CD4-positive, alpha-beta T cell (primary cell): ENCODE measurements at regions of chr12 and their contacts with region 1.

Region 1: GRCh38 chr12:12562585-12563261 is at the start of gene DUSP16:
- DNase-seq: peak; percentile 52 to 95 (median 69)
- ATAC-seq: peak; percentile 62
- H3K4me3 ChIP-seq: peak within 1 kb of the TSS; percentile 88
- H3K4me3 Mint-ChIP-seq: peak within 1 kb of the TSS; percentile 99
- H3K27ac ChIP-seq: peak within 1 kb of the TSS; percentile 95 to 98
- H3K27ac Mint-ChIP-seq: peak within 1 kb of the TSS; percentile 99
- H3K4me1 ChIP-seq: peaks cover 19% of the 10 kb centered on the region
- H3K4me1 Mint-ChIP-seq: peaks cover 52% of the 10 kb centered on the region
- H3K27me3 ChIP-seq: no peaks in the 10 kb centered on the region
- H3K27me3 Mint-ChIP-seq: no peaks in the 10 kb centered on the region
- CTCF ChIP-seq: no peak
- total RNA-seq, gene DUSP16: 33.3 to 35.6 TPM

Region 2: DNA sequence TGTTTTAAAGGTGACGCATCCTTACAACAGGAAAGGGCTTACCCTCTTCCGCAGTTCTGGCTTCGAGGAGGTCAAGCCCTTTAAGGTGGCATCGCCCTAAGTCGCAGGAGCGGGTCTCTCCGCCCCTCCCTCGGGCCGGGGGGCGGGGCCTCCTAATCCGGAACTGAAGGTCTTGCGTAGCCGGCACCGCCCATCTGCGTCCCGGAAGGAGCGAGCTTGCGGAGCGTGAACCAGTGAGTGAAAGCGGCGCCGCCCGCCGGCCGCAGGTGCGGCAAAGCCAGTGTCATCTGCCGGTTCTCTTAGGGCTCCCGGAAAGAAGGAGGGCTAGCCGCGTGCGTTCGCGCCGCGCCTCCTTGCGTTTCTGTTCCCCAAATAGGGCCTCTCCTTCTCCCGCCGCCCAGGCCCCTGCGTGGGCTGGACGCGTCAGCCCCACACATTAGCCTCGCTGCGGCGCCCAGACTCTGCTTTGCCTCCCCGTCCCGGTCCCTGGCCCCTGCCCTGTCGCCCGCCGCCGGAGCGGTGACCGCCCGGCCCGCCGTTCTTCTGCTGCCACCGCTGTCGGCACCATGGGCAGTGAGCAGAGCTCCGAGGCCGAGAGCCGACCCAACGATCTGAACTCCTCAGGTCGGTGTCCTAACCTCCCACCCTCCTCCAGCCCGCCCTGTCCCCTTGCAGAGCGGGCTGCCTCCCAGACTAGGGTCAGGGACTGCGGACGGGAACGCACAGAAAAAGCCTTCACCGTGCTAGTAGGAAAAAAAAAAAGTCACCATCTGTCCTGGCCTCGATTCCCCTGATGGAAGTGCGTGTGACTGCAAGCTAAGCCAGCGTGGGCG is 205.6 kb before region 1 on chr12 and contains the start of gene BORCS5:
- CTCF ChIA-PET with region 1: no interaction called
- POLR2A ChIA-PET with region 1: interaction called, 26 read pairs
- intact Hi-C with region 1: loop called in 1 of 2 experiments (anchors 5 kb)
- DNase-seq: peak; percentile 96 to 99 (median 98)
- ATAC-seq: peak; percentile 85
- H3K4me3 ChIP-seq: peak within 1 kb of the TSS; percentile 87
- H3K4me3 Mint-ChIP-seq: peak within 1 kb of the TSS; percentile 94
- H3K27ac ChIP-seq: peak within 1 kb of the TSS; percentile 86 to 93
- H3K27ac Mint-ChIP-seq: peak within 1 kb of the TSS; percentile 97
- H3K4me1 ChIP-seq: peaks cover 41% of the 10 kb centered on the region
- H3K4me1 Mint-ChIP-seq: peaks cover 64% of the 10 kb centered on the region
- H3K27me3 ChIP-seq: no peaks in the 10 kb centered on the region
- H3K27me3 Mint-ChIP-seq: no peaks in the 10 kb centered on the region
- CTCF ChIP-seq: peak; percentile 30
- total RNA-seq, gene BORCS5: 36.4 to 39.3 TPM

Region 3: DNA sequence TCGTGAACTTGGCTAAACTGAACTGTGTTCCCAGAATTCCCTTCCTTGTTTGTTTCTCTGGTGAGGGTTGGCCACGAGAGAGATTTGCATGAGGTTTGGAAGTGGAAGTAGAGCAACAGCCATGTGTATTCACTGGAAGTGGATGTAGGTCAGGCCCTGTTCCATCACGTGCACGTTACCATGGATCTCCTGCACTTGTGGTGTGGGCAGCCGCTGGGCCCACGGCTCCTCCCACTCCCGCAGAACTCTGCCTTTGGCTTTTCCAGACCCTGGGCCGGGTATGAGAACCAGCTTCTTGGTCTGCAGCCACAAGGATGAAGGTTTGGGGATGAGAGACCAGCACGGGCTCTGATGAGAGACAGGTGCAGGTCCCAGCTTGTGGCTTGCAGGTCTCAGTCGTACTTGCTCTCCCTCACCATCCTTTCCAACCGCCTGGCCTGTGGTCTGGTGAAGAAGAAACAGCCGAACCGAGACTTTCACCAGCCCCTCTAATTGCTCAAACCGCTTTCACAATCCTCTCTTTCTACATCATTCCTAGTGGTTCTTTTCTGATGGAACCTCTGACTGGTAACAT is 94.9 kb before region 1 on chr12:
- CTCF ChIA-PET with region 1: interaction called, 7 read pairs
- POLR2A ChIA-PET with region 1: interaction called, 45 read pairs
- intact Hi-C with region 1: loop called in 1 of 2 experiments (anchors 2 kb)
- DNase-seq: peak in 11 of 14 experiments; percentile 15 to 87 (median 51)
- ATAC-seq: peak; percentile 23
- H3K4me3 ChIP-seq: no peak overlapping the region
- H3K4me3 Mint-ChIP-seq: peak overlapping the region; percentile 40
- H3K27ac ChIP-seq: peak overlapping the region; percentile 78 to 81
- H3K27ac Mint-ChIP-seq: peak overlapping the region; percentile 98
- H3K4me1 ChIP-seq: peaks cover 69% of the 10 kb centered on the region
- H3K4me1 Mint-ChIP-seq: peaks cover 79% of the 10 kb centered on the region
- H3K27me3 ChIP-seq: no peaks in the 10 kb centered on the region
- H3K27me3 Mint-ChIP-seq: no peaks in the 10 kb centered on the region
- CTCF ChIP-seq: no peak

Region 4: DNA sequence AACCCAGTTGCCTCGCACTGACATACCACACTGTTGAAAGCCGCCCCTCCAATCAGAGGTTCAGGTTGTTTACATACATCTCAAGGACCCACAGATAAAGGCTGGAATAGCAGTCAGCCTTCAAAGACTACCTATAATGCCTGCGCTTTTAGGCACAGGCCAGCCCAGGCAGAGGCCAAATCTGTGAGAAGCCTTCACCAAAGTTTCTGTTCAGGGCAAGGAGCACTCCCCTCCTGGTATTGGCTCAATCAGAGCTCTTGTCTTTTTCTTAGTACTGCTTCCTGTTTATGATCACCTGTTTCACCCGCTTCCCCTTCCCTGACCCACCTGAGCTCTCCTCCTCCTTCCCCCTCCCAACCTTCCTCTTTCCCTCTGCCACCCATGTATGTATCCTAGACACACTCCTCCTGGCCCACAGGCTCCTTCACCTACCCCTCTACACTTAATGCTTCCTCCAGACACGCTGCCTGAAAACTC is 34.9 kb before region 1 on chr12:
- CTCF ChIA-PET with region 1: interaction called, 3 read pairs
- POLR2A ChIA-PET with region 1: interaction called, 17 read pairs
- intact Hi-C with region 1: no loop called
- DNase-seq: peak in 5 of 14 experiments; percentile 7 to 73 (median 39)
- ATAC-seq: peak; percentile 76
- H3K4me3 ChIP-seq: no peak overlapping the region
- H3K4me3 Mint-ChIP-seq: peak overlapping the region; percentile 57
- H3K27ac ChIP-seq: peak overlapping the region; percentile 48 to 72
- H3K27ac Mint-ChIP-seq: peak overlapping the region; percentile 94
- H3K4me1 ChIP-seq: peaks cover 20% of the 10 kb centered on the region
- H3K4me1 Mint-ChIP-seq: peaks cover 51% of the 10 kb centered on the region
- H3K27me3 ChIP-seq: no peaks in the 10 kb centered on the region
- H3K27me3 Mint-ChIP-seq: no peaks in the 10 kb centered on the region
- CTCF ChIP-seq: no peak

Region 5: GRCh38 chr12:12645485-12645884 is 82.8 kb after region 1 on chr12:
- CTCF ChIA-PET with region 1: interaction called, 4 read pairs
- POLR2A ChIA-PET with region 1: interaction called, 4 read pairs
- intact Hi-C with region 1: loop called in 1 of 2 experiments (anchors 5 kb)
- DNase-seq: peak in 12 of 14 experiments; percentile 4 to 79 (median 33)
- ATAC-seq: peak; percentile 91
- H3K4me3 ChIP-seq: no peak overlapping the region
- H3K4me3 Mint-ChIP-seq: no peak overlapping the region
- H3K27ac ChIP-seq: no peak overlapping the region
- H3K27ac Mint-ChIP-seq: peak overlapping the region; percentile 14
- H3K4me1 ChIP-seq: peaks cover 6% of the 10 kb centered on the region
- H3K4me1 Mint-ChIP-seq: peaks cover 6% of the 10 kb centered on the region
- H3K27me3 ChIP-seq: no peaks in the 10 kb centered on the region
- H3K27me3 Mint-ChIP-seq: no peaks in the 10 kb centered on the region
- CTCF ChIP-seq: peak; percentile 56

Region 6: GRCh38 chr12:12704593-12705230 is 142.0 kb after region 1 on chr12:
- CTCF ChIA-PET with region 1: no interaction called
- POLR2A ChIA-PET with region 1: no interaction called
- intact Hi-C with region 1: loop called (anchors 2 to 5 kb)
- DNase-seq: peak in 7 of 14 experiments; percentile 22 to 84 (median 57)
- ATAC-seq: peak; percentile 88
- H3K4me3 ChIP-seq: no peak overlapping the region
- H3K4me3 Mint-ChIP-seq: peak overlapping the region; percentile 32
- H3K27ac ChIP-seq: no peak overlapping the region
- H3K27ac Mint-ChIP-seq: peak overlapping the region; percentile 69
- H3K4me1 ChIP-seq: peaks cover 29% of the 10 kb centered on the region
- H3K4me1 Mint-ChIP-seq: peaks cover 29% of the 10 kb centered on the region
- H3K27me3 ChIP-seq: no peaks in the 10 kb centered on the region
- H3K27me3 Mint-ChIP-seq: no peaks in the 10 kb centered on the region
- CTCF ChIP-seq: peak; percentile 73